CD4-positive, alpha-beta memory T cell (primary cell): ENCODE measurements at regions of chr22 and their contacts with region 1.

Region 1: GRCh38 chr22:38793721-38794466 is at the start of gene DNAL4:
- DNase-seq: peak; percentile 93 to 96 (median 95)
- H3K4me3 ChIP-seq: peak within 1 kb of the TSS; percentile 52 to 62
- H3K4me3 Mint-ChIP-seq: peak within 1 kb of the TSS; percentile 88 to 93 (median 91)
- H3K27ac ChIP-seq: peak within 1 kb of the TSS; percentile 78
- H3K27ac Mint-ChIP-seq: peak within 1 kb of the TSS; percentile 88 to 97 (median 94)
- H3K4me1 ChIP-seq: peaks cover 16% of the 10 kb centered on the region
- H3K4me1 Mint-ChIP-seq: peaks cover 15 to 22% (median 18%) of the 10 kb centered on the region in 4 donors
- H3K27me3 ChIP-seq: no peaks in the 10 kb centered on the region
- H3K27me3 Mint-ChIP-seq: peaks cover 4 to 23% of the 10 kb centered on the region in 2 donors
- total RNA-seq, gene DNAL4: 8.6 to 9.6 TPM

Region 2: GRCh38 chr22:38843201-38843715 is 49.4 kb after region 1 on chr22:
- CTCF ChIA-PET with region 1: interaction called, 3 read pairs
- POLR2A ChIA-PET with region 1: interaction called, 4 read pairs
- intact Hi-C with region 1: loop called (anchors 1 kb)
- DNase-seq: peak; percentile 56 to 66 (median 61)
- H3K4me3 ChIP-seq: peak overlapping the region in 1 of 2 donors; percentile 50
- H3K4me3 Mint-ChIP-seq: peak overlapping the region in 1 of 8 donors; percentile 32
- H3K27ac ChIP-seq: no peak overlapping the region
- H3K27ac Mint-ChIP-seq: peak overlapping the region in 1 of 7 donors; percentile 69
- H3K4me1 ChIP-seq: peaks cover 20% of the 10 kb centered on the region
- H3K4me1 Mint-ChIP-seq: peaks cover 7 to 31% (median 17%) of the 10 kb centered on the region in 4 donors
- H3K27me3 ChIP-seq: peaks cover 9% of the 10 kb centered on the region
- H3K27me3 Mint-ChIP-seq: peaks cover 0 to 12% of the 10 kb centered on the region in 2 donors

Region 3: GRCh38 chr22:38953577-38954413 is 159.9 kb after region 1 on chr22:
- CTCF ChIA-PET with region 1: no interaction called
- POLR2A ChIA-PET with region 1: no interaction called
- intact Hi-C with region 1: no loop called
- DNase-seq: peak; percentile 17 to 84 (median 38)
- H3K4me3 ChIP-seq: no peak overlapping the region
- H3K4me3 Mint-ChIP-seq: peak overlapping the region in 1 of 8 donors; percentile 38
- H3K27ac ChIP-seq: no peak overlapping the region
- H3K27ac Mint-ChIP-seq: peak overlapping the region in 6 of 7 donors; percentile 23 to 82 (median 73)
- H3K4me1 ChIP-seq: peaks cover 9% of the 10 kb centered on the region
- H3K4me1 Mint-ChIP-seq: peaks cover 4 to 15% (median 6%) of the 10 kb centered on the region in 4 donors
- H3K27me3 ChIP-seq: no peaks in the 10 kb centered on the region
- H3K27me3 Mint-ChIP-seq: peaks cover 0 to 1% of the 10 kb centered on the region in 2 donors